ENCODE measurements at regions of chr2 and their contacts with region 1.

Region 1: DNA sequence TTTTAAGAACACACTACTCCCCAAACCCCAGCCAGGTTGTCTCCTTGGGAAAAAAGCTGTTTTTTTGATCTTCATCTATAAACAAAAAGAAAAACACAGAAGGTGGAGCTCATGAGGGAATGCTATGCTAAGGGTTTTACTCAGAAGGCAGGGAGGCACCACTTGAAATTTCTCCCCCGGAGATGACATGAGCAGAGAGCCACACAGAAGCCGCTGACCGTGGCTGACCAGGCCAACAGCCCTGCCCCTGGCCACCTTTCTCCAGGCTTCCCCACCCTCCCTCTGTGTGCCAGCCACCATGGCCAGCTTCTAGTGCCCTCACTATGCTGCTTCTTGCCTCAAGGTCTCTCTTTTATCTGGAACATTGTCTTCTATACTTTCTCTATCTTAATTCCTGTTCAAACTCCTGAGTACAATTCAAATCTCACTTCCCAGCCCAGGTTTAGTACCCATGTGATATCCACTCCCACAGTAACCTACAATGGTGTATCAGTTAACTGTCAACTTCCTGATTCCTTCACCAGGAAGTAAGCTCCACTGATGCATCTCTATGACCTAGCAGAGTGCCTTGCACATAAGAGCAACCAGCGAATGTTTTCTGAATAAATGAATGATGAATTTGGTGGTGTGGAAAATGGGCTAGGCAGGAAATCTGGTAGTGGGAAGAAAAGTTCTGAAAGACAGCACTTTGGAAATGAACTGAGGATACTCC is 15.3 kb downstream of the LAPTM4A start:
- DNase-seq: no peak
- H3K4me3 ChIP-seq: no peak overlapping the region
- H3K27ac ChIP-seq: no peak overlapping the region
- H3K4me1 ChIP-seq: peaks cover 11% of the 10 kb centered on the region
- H3K27me3 ChIP-seq: no peaks in the 10 kb centered on the region
- CTCF ChIP-seq: no peak

Region 2: GRCh38 chr2:19504400-19505198 is 531.5 kb before region 1 on chr2:
- CTCF ChIA-PET with region 1: no interaction called
- POLR2A ChIA-PET with region 1: no interaction called
- intact Hi-C with region 1: no loop called
- DNase-seq: no peak
- H3K4me3 ChIP-seq: no peak overlapping the region
- H3K27ac ChIP-seq: no peak overlapping the region
- H3K4me1 ChIP-seq: no peaks in the 10 kb centered on the region
- H3K27me3 ChIP-seq: no peaks in the 10 kb centered on the region
- CTCF ChIP-seq: no peak

Region 3: GRCh38 chr2:19538405-19538963 is 497.6 kb before region 1 on chr2:
- CTCF ChIA-PET with region 1: no interaction called
- POLR2A ChIA-PET with region 1: no interaction called
- intact Hi-C with region 1: no loop called
- DNase-seq: peak; percentile 77 to 98
- H3K4me3 ChIP-seq: peak overlapping the region; percentile 41; the same call in 1 of the 2 replicates
- H3K27ac ChIP-seq: peak overlapping the region; percentile 97
- H3K4me1 ChIP-seq: peaks cover 70% of the 10 kb centered on the region
- H3K27me3 ChIP-seq: no peaks in the 10 kb centered on the region
- CTCF ChIP-seq: no peak

Region 4: DNA sequence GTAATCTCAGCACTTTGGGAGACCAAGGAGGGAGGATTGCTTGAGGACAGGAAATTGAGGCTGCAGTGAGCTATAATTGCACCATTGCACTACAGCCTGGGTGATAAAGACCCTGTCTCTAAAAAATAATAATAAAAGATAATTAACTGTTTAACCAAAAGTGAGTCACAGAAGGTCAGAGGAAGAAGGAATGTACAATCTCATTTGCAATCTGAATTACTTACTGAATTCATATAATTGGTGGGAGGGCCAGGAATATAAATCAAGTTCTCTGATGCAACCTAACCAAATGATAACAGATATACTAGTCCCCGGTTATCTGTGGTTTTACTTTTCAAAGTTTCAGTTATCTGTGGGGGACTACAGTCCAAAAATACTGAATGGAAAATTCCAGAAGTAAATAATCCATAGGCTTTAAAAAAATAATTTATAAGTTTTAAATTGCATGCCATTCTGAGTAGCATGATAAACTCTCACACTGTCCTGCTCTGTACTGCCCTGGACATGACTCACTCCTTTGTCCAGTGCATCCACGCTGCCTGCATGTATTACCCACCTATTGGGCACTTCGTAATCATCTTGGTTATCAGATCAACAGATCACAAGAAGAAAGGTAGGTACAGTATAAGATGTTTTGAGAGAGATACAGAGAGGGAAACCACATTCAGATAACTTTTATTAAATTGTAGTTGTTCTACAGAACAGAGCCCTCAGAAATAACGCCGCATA is 10.9 kb before region 1 on chr2:
- CTCF ChIA-PET with region 1: no interaction called
- POLR2A ChIA-PET with region 1: no interaction called
- intact Hi-C with region 1: no loop called
- DNase-seq: peak in 1 of 2 experiments; percentile 43
- H3K4me3 ChIP-seq: no peak overlapping the region
- H3K27ac ChIP-seq: no peak overlapping the region
- H3K4me1 ChIP-seq: no peaks in the 10 kb centered on the region
- H3K27me3 ChIP-seq: no peaks in the 10 kb centered on the region
- CTCF ChIP-seq: no peak

Region 5: DNA sequence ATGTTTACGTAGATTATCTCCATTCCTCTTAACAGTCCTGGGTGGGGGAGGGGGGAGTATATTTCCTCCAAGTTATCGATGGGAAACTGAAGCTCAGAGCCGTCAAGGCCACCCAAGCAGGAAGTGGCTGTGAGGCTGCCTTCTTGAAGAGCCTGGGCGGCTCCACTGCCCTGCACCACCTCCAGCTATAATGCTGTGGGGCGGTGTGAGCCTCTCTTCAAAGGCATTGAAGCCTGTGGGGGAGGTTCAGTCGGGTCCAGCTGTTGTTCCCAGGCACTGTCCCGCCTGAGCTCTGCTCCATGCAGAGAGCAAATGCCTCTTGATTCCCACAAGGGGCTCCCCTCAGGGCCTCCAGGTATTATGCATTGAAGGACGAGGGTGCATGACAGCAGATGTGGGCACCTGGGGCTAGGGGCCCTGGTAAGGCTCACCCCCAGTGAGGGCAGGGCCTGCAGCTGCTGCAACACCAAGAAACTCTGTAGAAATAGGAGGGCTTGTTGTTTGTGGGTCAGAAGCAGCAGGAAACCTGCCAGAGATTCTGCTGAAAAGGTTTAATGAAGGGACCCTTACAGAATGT is 44.8 kb after region 1 on chr2:
- CTCF ChIA-PET with region 1: no interaction called
- POLR2A ChIA-PET with region 1: interaction called, 26 read pairs
- intact Hi-C with region 1: no loop called
- DNase-seq: no peak
- H3K4me3 ChIP-seq: no peak overlapping the region
- H3K27ac ChIP-seq: no peak overlapping the region
- H3K4me1 ChIP-seq: peaks cover 48% of the 10 kb centered on the region
- H3K27me3 ChIP-seq: no peaks in the 10 kb centered on the region
- CTCF ChIP-seq: no peak

Measured in PC-9 (cell line).